Right ventricle myocardium inferior (tissue), 1 donor: ENCODE measurements at regions of chr9 and their contacts with region 1.

Region 1: DNA sequence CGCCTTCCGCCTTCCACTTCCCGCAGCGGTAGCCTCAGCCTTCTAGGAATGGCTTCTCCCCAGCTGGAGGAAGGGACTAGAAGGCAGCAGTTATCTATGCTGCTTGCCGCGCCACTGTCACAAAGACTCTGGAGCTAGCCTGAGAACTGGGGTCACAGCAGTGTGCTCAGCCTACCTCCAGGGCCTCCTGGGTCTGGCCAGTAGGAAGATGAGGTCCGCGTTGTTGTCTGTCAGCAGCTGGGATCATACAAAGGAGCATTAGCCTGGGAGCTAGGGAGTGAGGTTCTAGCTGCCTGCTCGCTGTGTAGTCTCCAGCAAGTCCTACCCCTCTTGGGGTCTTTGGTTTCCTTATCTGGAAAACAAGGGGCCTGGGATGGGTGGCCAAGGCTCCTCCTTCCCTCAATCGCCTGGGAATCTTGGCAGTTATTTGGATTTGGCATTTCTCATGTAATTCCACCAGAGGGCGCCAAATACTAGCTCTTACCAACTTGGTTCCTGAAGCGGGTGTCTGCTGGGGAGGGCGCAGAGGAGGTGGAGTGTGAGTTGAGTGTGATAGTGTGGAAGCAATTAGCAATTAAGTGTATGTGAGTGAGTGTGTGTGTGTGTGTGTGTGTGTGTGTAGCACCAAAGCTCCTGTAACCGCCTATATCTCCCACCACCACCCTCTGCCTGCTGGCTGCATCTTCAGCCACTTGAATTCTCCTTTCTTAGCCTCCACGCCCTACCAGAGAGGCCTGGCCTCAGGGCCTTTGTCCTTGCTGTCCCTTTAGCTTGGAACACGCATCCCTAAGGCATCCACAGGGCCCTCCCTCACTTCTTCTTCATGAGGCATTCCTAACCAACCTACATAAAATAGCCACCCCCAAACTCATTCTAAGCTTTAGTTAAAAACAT is 97.1 kb downstream of the ENTREP1 start:
- DNase-seq: no peak
- ATAC-seq: peak; percentile 80

Region 2: GRCh38 chr9:68841276-68842052 is 580.7 kb before region 1 on chr9:
- intact Hi-C with region 1: no loop called
- DNase-seq: no peak
- ATAC-seq: no peak

Region 3: GRCh38 chr9:69295872-69296552 is 126.1 kb before region 1 on chr9:
- intact Hi-C with region 1: no loop called
- DNase-seq: no peak
- ATAC-seq: peak; percentile 72

Region 4: DNA sequence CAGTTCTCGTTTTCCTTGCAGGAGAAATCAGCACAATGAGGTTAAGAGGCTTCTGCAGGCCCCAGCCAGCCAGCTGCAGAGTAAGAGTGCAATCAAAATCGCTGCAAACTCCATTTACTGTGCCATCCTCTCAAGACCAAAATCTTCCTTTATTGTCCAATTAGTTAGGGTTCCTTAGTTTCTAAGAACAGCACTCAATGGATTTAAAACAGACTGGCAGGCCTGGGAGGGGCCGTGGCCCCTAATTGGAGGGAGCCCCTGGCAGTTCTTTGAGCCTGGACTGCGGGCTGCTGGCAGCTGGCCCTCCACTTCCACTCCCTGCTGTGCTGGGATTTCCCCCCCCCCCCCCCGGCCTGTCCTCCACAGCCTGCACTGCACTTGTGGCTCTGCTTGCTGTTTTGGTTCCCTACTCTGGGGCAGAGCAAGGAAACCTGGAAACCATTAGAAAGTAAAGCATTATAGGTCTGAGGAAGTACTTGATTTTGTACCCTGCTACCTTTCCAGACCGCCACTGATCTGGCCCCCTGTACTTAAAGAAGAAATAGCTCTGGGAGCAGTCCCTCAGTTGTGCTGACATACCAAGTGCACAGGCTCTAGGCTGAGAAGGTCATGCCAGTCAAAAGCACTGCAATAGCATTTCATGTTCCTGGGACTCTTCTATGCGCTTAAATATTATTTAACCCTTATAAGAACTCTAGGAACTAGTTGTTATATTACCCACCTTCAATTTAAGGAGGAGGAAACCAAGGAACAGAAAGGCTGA is 121.0 kb after region 1 on chr9:
- intact Hi-C with region 1: no loop called
- DNase-seq: no peak
- ATAC-seq: peak; percentile 91

Region 5: DNA sequence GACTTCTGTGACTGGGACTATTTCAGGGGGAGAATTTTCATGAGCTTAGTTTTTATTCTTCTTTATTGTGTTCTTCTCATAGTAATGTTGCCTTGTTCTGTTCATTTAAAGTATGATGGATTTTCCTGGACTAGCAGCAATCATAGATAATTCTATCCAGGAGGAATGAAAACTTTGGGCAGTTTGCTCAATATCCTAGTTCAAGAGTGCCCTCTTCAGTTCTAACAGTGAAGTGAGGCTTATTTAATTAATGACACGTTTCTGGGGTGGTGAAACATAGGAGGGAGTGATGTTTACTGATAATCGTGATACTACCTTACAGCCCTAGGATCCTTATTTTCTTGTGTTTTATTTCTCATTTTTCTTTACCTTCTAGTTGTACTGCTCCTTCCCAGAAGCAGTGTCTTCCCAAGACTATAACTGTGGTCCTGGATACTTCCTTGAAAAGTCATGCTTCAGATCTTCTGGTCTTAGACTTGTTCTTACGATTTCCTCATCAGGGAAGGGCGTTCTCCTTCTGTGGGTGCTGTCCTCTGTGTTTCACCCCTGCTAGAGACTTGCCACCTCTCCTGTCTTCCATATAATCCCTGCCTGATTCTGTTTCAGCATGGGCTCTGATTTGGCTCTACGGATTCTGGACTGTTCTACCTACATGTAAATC is 455.8 kb after region 1 on chr9:
- intact Hi-C with region 1: loop called (anchors 5 kb)
- DNase-seq: no peak
- ATAC-seq: peak; percentile 56

Region 6: DNA sequence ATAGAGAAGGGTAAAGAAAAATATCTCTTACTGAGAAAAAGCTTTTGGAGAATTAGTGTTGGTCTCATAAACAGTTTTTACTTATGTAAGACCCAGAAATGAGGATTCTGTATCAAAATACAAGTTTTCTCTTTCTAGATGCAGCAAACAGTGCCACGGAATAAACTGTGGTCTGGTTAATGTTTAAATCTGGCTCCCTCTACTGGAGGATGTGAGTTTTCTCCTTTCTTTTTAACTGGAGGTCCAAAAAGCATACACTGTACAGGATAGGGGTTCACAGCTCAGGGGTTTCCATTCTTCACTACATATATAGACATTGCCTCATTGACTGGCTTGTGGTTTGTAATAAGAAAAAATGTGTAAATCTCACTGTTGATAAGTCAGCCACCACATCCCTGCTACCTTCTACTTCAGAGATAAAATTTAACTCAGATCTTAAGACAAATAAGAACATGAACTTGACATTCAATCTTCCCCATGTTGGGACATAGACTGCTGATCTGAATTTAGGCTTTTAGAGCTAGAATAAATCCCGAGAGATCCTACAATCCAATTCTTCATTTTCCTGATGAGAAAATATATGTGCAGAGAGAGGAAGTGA is 497.4 kb after region 1 on chr9:
- intact Hi-C with region 1: loop called (anchors 2 kb)
- DNase-seq: no peak
- ATAC-seq: peak; percentile 77